Activated T-helper 1 cell treated with anti-CD3 and anti-CD28 coated beads, Interleukin-12 subunit alpha, Interleukin-12 subunit beta, Interleukin-2, Interleukin-4 antibody, amounts not matched to agents 30 ng/mL and 10 ng/mL and 1 ng/mL, durations not matched to agents 14 hours and 24 hours and 36 hours (primary cell): ENCODE measurements at regions of chr10 and their contacts with region 1.

Region 1: DNA sequence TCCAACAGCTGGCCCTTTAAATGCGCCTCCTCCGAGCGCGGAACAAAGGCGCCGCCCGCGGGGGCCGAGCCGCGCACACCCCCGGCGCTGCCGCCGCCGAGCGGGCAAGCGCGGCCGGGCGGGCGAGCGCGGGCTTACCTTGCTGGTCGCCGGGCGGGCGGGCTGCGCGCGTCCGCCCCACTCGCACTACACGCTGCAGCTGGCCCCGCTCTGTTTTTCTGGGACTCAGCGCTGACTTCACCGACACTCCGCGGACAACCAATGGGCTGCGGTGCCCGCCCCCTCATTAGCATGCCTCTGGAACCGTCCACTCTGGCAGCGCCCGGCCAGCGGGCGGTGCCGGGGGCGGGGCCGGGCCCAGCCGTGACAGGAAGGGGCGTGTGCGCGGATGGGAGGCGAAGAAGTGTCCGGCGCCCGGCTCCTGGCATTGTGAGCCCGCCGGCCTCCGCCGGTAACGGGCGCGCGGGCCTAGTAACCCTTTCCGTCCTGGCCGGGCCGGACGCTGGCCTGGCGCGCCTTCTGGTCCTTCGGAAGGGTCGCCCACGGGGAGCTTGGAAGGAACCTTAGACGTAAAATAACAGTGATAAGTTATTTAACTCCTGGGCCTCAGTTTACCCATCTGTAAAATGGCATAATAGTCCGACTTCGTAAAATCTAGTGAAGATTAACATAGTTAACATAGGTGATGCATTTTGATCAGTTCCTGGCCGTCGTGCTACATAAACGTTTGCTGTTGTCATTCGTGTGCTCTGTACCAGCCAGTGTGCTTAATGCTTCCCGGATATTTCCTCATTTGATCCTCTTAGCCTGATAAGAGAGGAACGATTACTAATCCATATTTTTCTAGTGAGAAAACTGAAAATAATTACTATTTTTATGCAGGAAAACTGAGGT is at the start of gene SORBS1:
- DNase-seq: peak; percentile 90
- H3K4me3 Mint-ChIP-seq: peak within 1 kb of the TSS; percentile 94
- H3K27ac Mint-ChIP-seq: peak within 1 kb of the TSS; percentile 77
- H3K4me1 Mint-ChIP-seq: peaks cover 15% of the 10 kb centered on the region
- H3K27me3 Mint-ChIP-seq: peaks cover 39% of the 10 kb centered on the region
- total RNA-seq, gene SORBS1: 0.59 and 0.73 TPM in 2 replicates

Region 2: DNA sequence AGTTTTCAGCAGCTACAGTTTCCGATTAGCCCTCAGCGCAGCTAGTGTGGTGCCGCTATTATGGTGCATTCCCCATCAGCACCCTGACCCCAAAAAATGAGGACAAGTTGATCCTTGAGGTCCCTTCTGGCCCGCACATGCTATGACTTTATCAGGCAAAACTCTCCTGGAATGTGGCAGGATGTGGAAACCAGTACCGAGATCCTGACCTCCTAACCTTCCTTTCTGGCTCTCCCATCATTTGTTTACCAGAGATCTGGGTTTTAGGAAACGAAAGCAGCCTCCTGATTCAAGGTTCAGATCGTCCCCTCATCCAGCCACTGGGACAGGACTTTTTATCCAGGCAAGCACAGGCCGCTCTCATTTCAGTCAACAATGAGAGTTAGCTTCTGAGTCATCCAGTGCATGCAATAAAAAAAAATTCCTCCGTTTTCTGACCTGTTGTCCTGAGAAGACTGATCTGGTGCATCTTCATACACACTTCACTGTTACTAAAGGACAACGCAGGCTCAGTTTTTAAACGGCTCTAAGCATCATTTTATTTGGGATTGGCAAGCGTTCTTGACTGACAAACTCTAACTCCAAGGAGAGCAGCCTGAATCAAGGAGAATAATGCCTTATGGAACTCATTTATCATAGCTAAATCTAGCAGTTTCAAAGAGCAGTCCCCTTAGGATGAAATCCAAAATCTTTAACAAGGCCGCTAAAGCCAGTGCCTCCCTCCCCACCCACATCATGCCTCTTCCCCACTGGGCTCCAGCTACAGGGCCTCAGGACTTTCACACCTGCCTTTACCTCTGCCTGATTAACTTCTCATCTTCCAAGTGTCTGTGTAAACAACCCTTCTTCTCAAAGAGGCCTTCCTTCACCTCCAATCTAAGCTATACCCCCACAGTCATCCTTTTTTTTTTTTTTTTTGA is 287.8 kb before region 1 on chr10:
- intact Hi-C with region 1: no loop called
- DNase-seq: no peak
- H3K4me3 Mint-ChIP-seq: no peak overlapping the region
- H3K27ac Mint-ChIP-seq: no peak overlapping the region
- H3K4me1 Mint-ChIP-seq: no peaks in the 10 kb centered on the region
- H3K27me3 Mint-ChIP-seq: peaks cover 2% of the 10 kb centered on the region

Region 3: GRCh38 chr10:95531994-95532399 is 29.4 kb before region 1 on chr10:
- intact Hi-C with region 1: loop called (anchors 2 kb)
- DNase-seq: no peak
- H3K4me3 Mint-ChIP-seq: no peak overlapping the region
- H3K27ac Mint-ChIP-seq: no peak overlapping the region
- H3K4me1 Mint-ChIP-seq: peaks cover 4% of the 10 kb centered on the region
- H3K27me3 Mint-ChIP-seq: peaks cover 6% of the 10 kb centered on the region

Region 4: DNA sequence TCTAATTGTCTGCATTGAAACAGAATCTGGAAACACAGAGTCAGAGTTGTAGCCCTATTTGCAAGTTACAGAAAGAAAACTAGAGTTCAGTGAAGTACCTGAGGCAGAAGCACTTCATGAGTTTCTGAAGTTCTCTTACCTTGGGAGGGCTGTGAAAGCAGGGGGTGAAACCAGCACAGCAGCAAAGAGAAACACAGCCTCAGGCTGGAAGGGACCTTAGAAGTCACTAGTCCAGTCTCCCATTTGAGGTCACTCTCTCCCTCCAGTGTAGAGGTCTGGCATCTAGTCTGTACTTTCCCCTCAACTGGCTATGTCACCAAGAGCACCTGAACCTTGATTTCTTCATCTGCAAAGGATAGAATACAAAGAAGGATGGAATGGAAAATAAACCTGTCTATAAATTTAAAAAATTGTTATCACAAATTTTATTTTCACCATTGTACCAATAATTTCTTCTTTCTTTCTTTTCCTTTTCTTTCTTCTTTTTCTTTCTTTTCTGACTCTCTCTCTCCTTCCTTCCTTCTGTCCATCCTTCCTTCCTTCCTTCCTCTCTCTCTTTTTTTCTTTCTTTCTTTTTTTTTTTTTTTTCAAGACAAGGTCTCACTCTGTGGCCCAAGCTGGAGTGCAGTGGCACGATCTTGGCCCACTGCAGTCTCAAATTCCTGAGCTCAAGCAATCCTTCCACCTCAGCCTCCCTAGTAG is 36.2 kb after region 1 on chr10:
- intact Hi-C with region 1: no loop called
- DNase-seq: no peak
- H3K4me3 Mint-ChIP-seq: no peak overlapping the region
- H3K27ac Mint-ChIP-seq: no peak overlapping the region
- H3K4me1 Mint-ChIP-seq: no peaks in the 10 kb centered on the region
- H3K27me3 Mint-ChIP-seq: peaks cover 14% of the 10 kb centered on the region

Region 5: GRCh38 chr10:95656291-95657164 is 95.1 kb after region 1 on chr10 and contains the start of gene ALDH18A1:
- intact Hi-C with region 1: loop called (anchors 1 kb)
- DNase-seq: peak; percentile 89
- H3K4me3 Mint-ChIP-seq: peak within 1 kb of the TSS; percentile 99
- H3K27ac Mint-ChIP-seq: peak within 1 kb of the TSS; percentile 98
- H3K4me1 Mint-ChIP-seq: peaks cover 27% of the 10 kb centered on the region
- H3K27me3 Mint-ChIP-seq: no peaks in the 10 kb centered on the region
- total RNA-seq, gene ALDH18A1: 122 and 127 TPM in 2 replicates